PC-9 (cell line): ENCODE measurements at regions of chr3 and their contacts with region 1.

Region 1: DNA sequence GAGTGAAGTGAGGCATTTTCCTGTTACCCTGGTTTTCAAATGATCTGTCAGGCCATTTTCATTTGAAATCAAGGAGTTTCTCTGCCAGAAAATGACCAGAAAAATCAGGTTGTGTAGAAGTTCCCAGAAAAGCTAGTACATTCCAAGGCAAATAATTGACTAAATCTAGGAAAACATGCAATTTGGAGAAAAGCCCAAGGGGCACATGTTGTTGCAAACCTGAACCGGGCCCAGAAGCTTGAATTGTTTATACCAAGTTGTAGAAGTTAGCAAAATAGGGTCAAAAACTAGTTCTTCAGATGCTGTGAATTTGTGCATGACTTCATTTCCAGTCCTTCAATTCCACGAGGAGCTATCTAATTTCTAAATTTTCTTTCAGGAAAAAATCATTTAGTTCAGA is 31.0 kb downstream of the TRIM42 start:
- DNase-seq: no peak
- H3K4me3 ChIP-seq: no peak overlapping the region
- H3K27ac ChIP-seq: no peak overlapping the region
- H3K4me1 ChIP-seq: 0 out of 2 replicates have a peak, but pooled peaks cover 2% of the 10 kb centered on the region
- H3K27me3 ChIP-seq: no peaks in the 10 kb centered on the region
- CTCF ChIP-seq: no peak

Region 2: GRCh38 chr3:139552632-139553365 is 1156.0 kb before region 1 on chr3:
- CTCF ChIA-PET with region 1: no interaction called
- POLR2A ChIA-PET with region 1: no interaction called
- intact Hi-C with region 1: no loop called
- DNase-seq: no peak
- H3K4me3 ChIP-seq: no peak overlapping the region
- H3K27ac ChIP-seq: no peak overlapping the region
- H3K4me1 ChIP-seq: peaks cover 21% of the 10 kb centered on the region
- H3K27me3 ChIP-seq: no peaks in the 10 kb centered on the region
- CTCF ChIP-seq: no peak

Region 3: GRCh38 chr3:140316868-140317400 is 391.9 kb before region 1 on chr3:
- CTCF ChIA-PET with region 1: no interaction called
- POLR2A ChIA-PET with region 1: no interaction called
- intact Hi-C with region 1: no loop called
- DNase-seq: no peak
- H3K4me3 ChIP-seq: no peak overlapping the region
- H3K27ac ChIP-seq: no peak overlapping the region
- H3K4me1 ChIP-seq: no peaks in the 10 kb centered on the region
- H3K27me3 ChIP-seq: no peaks in the 10 kb centered on the region
- CTCF ChIP-seq: no peak

Region 4: DNA sequence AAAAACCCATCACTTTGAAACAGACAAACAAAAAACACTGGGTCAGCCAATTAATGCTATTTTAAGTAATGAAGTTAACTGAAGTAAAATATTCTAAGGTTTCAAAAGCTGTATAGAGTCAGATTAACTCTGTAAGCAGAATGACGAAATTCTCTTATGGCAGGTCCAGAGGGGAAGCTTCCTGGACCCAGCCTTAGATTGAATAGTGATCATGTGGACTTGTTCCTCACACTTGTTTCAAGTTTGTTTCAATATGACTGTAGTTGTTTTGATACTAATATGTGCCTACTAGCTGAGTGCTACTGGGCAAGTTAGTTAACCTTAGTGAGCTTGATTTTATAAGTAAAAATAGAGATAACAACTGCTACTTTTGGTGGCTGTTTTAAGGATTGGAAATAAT is 1920.0 kb after region 1 on chr3:
- CTCF ChIA-PET with region 1: interaction called, 17 read pairs
- POLR2A ChIA-PET with region 1: no interaction called
- intact Hi-C with region 1: no loop called
- DNase-seq: no peak
- H3K4me3 ChIP-seq: no peak overlapping the region
- H3K27ac ChIP-seq: no peak overlapping the region
- H3K4me1 ChIP-seq: no peaks in the 10 kb centered on the region
- H3K27me3 ChIP-seq: no peaks in the 10 kb centered on the region
- CTCF ChIP-seq: no peak